Activated CD4-positive, alpha-beta memory T cell treated with anti-CD3 and anti-CD28 coated beads, Interleukin-2, amount 10 ng/mL, durations not matched to agents 7 days and 5 days (primary cell): ENCODE measurements at regions of chr12 and their contacts with region 1.

Region 1: DNA sequence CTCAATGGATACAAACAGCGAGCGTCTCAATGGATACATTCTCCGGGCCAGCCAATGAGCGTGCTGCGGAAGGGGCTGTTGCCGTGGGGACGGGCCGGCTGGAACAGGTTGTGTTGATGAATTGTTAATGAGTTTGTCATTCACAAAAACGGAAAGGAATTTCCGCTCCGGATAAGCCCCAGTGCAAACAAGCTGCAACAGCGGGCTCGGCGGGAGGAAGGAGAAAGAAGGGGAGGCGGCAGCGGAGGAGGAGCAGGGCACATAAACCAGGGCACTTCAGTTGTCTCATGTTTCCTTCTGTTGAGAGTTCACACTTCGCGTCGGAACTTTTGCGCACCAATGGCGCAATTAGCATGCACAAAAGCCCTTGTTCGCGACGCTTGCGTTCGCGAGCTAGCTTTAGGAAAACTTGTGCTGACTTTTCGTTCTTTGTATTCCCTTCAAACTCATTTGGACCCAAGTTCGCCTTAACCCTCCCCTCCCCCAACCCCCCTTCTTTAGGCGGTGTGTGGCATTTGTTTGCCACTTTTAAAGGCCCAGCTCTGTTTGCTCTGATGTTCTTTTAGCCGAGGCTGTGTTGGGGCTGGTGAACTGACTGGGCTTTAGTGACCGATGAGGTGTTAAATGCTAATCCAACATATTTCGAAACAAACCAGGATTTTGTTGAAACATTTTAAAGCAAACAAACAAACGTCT is at the start of gene DUSP6:
- DNase-seq: peak; percentile 98
- H3K4me3 Mint-ChIP-seq: peak within 1 kb of the TSS; percentile 98
- H3K27ac Mint-ChIP-seq: peak within 1 kb of the TSS; percentile 96
- H3K4me1 Mint-ChIP-seq: peaks cover 45% of the 10 kb centered on the region
- H3K27me3 Mint-ChIP-seq: no peaks in the 10 kb centered on the region
- total RNA-seq, gene DUSP6: 170 to 171 TPM

Region 2: GRCh38 chr12:89019408-89020120 is 333.1 kb before region 1 on chr12:
- CTCF ChIA-PET with region 1: interaction called, 92 read pairs
- POLR2A ChIA-PET with region 1: interaction called, 62 read pairs
- DNase-seq: peak; percentile 85
- H3K4me3 Mint-ChIP-seq: no peak overlapping the region
- H3K27ac Mint-ChIP-seq: no peak overlapping the region
- H3K4me1 Mint-ChIP-seq: peaks cover 26% of the 10 kb centered on the region
- H3K27me3 Mint-ChIP-seq: peaks cover 4% of the 10 kb centered on the region

Region 3: DNA sequence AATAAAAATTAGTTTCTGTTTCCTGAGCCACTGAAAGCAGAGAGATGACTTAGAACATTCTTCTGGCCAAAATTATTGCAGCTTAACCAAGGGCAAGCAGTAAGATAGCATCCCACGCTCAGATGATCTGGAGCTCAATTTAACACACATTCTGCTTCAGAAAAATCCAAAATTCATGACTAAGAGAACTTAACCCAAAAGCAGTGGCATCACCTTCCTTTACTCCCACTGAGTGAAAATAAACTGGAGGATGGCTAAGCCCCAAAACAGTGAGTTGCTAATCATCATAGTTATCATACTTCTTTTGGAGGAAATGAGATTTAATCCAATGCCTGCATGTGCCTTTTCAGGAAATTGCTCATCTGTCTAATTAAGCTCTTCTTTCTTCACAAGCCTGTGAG is 195.8 kb before region 1 on chr12:
- CTCF ChIA-PET with region 1: interaction called, 3 read pairs
- POLR2A ChIA-PET with region 1: interaction called, 38 read pairs
- DNase-seq: no peak
- H3K4me3 Mint-ChIP-seq: no peak overlapping the region
- H3K27ac Mint-ChIP-seq: peak overlapping the region; percentile 77
- H3K4me1 Mint-ChIP-seq: peaks cover 28% of the 10 kb centered on the region
- H3K27me3 Mint-ChIP-seq: no peaks in the 10 kb centered on the region

Region 4: GRCh38 chr12:89236748-89237388 is 115.8 kb before region 1 on chr12:
- CTCF ChIA-PET with region 1: no interaction called
- POLR2A ChIA-PET with region 1: interaction called, 24 read pairs
- DNase-seq: no peak
- H3K4me3 Mint-ChIP-seq: no peak overlapping the region
- H3K27ac Mint-ChIP-seq: peak overlapping the region; percentile 41
- H3K4me1 Mint-ChIP-seq: peaks cover 76% of the 10 kb centered on the region
- H3K27me3 Mint-ChIP-seq: no peaks in the 10 kb centered on the region

Region 5: DNA sequence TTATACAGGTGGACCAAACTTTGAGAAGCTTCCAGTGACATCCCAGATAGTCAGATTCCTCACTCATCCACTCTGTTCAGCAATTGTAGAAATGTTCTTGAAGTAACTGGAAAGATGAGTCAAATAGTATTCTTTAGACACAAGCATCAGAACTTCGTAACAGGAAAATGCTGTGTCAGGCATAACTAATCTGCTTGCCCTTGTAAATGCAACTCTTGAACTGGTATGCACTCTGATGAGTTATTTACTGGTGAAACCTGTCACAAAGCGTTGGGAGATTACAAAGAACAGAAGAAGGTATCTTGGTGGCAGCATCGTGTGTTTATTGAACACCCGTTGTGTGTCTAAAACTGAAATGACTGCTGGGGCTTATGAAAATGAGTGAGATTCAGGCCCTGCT is 10.4 kb after region 1 on chr12:
- CTCF ChIA-PET with region 1: interaction called, 3 read pairs
- POLR2A ChIA-PET with region 1: interaction called, 29 read pairs
- DNase-seq: no peak
- H3K4me3 Mint-ChIP-seq: no peak overlapping the region
- H3K27ac Mint-ChIP-seq: peak overlapping the region; percentile 65
- H3K4me1 Mint-ChIP-seq: peaks cover 23% of the 10 kb centered on the region
- H3K27me3 Mint-ChIP-seq: no peaks in the 10 kb centered on the region

Region 6: GRCh38 chr12:89461649-89462612 is 109.3 kb after region 1 on chr12:
- CTCF ChIA-PET with region 1: interaction called, 57 read pairs
- POLR2A ChIA-PET with region 1: interaction called, 98 read pairs
- DNase-seq: no peak
- H3K4me3 Mint-ChIP-seq: peak overlapping the region; percentile 65
- H3K27ac Mint-ChIP-seq: peak overlapping the region; percentile 59
- H3K4me1 Mint-ChIP-seq: peaks cover 62% of the 10 kb centered on the region
- H3K27me3 Mint-ChIP-seq: no peaks in the 10 kb centered on the region